ENCODE measurements at regions of chr1 and their contacts with region 1.

Region 1: GRCh38 chr1:179809506-179810366 is 66.6 kb downstream of the FAM163A start:
- DNase-seq: peak in 2 of 3 donors; percentile 46 to 76
- ATAC-seq: peak; percentile 52 to 57
- H3K4me3 ChIP-seq: no peak overlapping the region
- H3K27ac ChIP-seq: no peak overlapping the region
- H3K4me1 ChIP-seq: peaks cover 2% of the 10 kb centered on the region
- H3K27me3 ChIP-seq: no peaks in the 10 kb centered on the region

Region 2: GRCh38 chr1:179661018-179661417 is 148.7 kb before region 1 on chr1:
- intact Hi-C with region 1: no loop called
- DNase-seq: no peak
- ATAC-seq: no peak
- H3K4me3 ChIP-seq: no peak overlapping the region
- H3K27ac ChIP-seq: no peak overlapping the region
- H3K4me1 ChIP-seq: no peaks in the 10 kb centered on the region
- H3K27me3 ChIP-seq: no peaks in the 10 kb centered on the region

Region 3: DNA sequence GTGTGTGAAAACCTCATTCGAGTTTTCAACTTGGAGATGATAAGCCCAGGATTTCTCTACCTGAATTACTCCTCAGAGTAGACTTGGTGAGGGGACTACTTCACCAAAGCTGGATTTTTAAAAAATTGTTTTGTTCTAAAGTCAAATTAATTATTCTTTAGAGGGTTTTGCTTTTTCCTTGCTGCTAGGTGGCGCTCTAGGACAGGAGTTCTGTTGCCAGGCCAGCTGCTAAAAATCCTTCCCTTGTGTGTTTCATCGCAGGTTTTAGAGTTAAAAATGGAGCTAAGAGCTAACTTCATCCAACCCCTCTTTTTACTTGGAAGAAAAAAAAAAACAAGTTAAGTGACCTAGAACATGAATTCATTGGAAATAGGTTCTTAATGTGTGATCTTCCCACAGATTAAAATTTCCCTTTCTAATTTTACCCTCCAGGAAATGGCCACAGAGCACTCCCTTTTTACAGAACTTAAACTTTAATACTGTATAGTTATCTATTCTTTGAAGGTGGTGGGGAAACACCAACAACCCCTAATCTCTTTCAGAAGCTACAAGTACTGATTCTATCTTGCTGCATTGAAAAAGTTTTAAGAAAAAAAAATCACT is 103.3 kb before region 1 on chr1:
- intact Hi-C with region 1: loop called (anchors 1 to 5 kb)
- DNase-seq: peak in 2 of 3 donors; percentile 37 to 46
- ATAC-seq: no peak
- H3K4me3 ChIP-seq: no peak overlapping the region
- H3K27ac ChIP-seq: no peak overlapping the region
- H3K4me1 ChIP-seq: peaks cover 2% of the 10 kb centered on the region
- H3K27me3 ChIP-seq: no peaks in the 10 kb centered on the region

Region 4: GRCh38 chr1:180026556-180026955 is 216.8 kb after region 1 on chr1:
- intact Hi-C with region 1: no loop called
- DNase-seq: no peak
- ATAC-seq: no peak
- H3K4me3 ChIP-seq: no peak overlapping the region
- H3K27ac ChIP-seq: no peak overlapping the region
- H3K4me1 ChIP-seq: no peaks in the 10 kb centered on the region
- H3K27me3 ChIP-seq: no peaks in the 10 kb centered on the region